Sciatic nerve (tissue), 2 donors: ENCODE measurements at regions of chr17 and their contacts with region 1.

Region 1: GRCh38 chr17:78421484-78422266 is 43.2 kb downstream of the PGS1 start:
- DNase-seq: peak; percentile 88
- ATAC-seq: peak; percentile 83

Region 2: GRCh38 chr17:78250891-78251794 is 170.5 kb before region 1 on chr17:
- intact Hi-C with region 1: loop called (anchors 10 kb)
- DNase-seq: peak; percentile 89
- ATAC-seq: peak; percentile 79

Region 3: DNA sequence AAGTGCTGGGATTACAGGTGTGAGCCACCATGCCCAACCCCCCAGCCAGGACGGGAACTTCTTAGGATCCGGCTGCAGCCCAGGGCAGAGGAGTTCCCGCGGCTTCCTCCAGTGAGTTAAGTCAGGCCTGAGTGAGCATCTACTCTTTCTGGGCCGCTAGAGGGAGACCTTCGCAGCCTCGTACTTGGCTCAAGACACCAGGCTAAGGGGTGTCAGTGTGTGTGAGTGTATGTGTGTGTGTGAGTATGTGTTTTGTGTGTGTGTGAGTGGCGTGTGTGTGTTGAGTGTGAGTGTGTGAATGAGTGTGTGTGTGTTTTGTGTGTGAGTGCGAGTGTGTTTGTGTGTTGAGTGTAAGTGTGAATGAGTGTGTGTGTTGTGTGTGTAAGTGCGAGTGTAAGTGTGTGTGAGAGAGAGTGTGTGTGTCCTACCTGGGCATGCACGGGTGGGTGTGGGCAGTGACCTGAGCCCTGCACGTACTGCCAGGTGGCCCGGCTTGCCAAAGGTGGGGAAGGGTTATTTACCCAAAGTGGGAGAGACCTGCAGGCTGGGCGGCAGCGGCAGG is 131.8 kb before region 1 on chr17:
- intact Hi-C with region 1: loop called (anchors 5 kb)
- DNase-seq: peak; percentile 87
- ATAC-seq: peak; percentile 91

Region 4: DNA sequence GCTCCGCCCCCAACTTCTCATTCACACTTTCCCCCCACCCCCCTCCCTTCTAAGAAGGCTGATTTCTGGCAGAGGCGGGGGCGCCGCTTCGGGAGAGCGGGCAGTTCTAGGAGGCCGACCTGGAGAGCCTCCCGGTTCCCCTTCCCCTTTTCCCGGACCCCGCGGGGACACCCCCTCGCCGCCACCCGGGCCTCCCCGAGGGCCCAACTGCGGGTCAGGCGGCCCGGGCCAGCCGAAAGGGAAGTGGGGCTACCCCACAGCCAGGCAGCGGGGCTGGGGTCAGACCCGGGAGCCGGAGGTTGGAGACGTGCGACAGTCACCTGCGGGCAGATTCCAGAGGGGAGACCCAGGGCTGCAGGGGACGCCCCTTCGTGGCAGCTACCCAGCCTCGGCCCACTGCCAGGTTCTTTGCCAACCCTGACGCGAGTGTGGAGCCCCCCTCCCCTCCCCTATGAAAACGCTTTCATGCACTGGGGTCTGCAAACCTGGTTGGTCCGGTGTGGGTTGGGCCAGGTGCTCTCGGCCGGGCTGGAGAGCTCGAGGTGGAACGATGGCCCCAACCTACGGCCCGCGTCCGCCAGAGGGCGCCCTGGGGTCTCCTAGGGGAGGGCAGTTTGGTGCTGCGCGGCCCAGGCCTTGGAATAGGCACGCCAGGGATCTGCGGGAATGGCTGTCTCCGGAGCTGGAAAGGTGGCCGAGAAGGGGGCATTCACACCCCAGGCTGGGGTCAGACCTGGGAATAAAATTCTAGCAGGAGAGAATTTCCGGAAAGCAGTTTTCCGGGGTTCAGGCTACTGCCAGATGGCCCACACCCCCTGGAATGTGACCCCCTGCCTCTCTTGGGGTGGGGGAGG is 61.1 kb before region 1 on chr17:
- intact Hi-C with region 1: loop called (anchors 5 kb)
- DNase-seq: peak; percentile 98
- ATAC-seq: peak; percentile 76

Region 5: GRCh38 chr17:78510141-78511075 is 88.7 kb after region 1 on chr17:
- intact Hi-C with region 1: no loop called
- DNase-seq: no peak
- ATAC-seq: no peak